Thyroid gland (tissue), 4 donors: ENCODE measurements at regions of chr2 and their contacts with region 1.

Region 1: GRCh38 chr2:173210270-173211196 is 134.9 kb downstream of the MAP3K20 start:
- DNase-seq: peak; percentile 69 to 71
- H3K4me3 ChIP-seq: no peak overlapping the region
- H3K27ac ChIP-seq: peak overlapping the region in 2 of 3 donors; percentile 25 to 29
- H3K4me1 ChIP-seq: peaks cover 19 to 28% of the 10 kb centered on the region in 2 donors
- H3K27me3 ChIP-seq: no peaks in the 10 kb centered on the region
- CTCF ChIP-seq: peak; percentile 55 to 98 (median 90)
- POLR2A ChIP-seq: no peak

Region 2: DNA sequence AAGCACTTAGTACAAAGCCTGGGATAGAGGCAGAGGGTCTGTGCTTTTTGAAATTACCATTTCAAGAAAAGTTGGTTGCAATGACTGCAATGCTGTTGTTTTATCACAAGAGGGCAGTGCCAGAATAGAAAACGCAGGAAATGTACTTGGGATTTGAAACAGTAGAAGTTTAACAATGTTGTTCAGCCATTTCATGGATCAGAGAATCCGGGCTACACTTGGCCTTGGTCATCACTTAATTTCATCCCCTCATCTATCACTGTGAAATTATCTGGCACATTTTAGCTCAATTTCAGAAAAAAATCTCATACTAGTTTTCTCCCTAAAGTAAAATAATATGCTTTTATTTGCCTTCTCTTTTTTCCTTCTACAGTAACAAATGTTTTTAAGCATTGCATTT is 404.0 kb before region 1 on chr2:
- intact Hi-C with region 1: loop called (anchors 5 kb)
- DNase-seq: no peak
- H3K4me3 ChIP-seq: no peak overlapping the region
- H3K27ac ChIP-seq: no peak overlapping the region
- H3K4me1 ChIP-seq: no peaks in the 10 kb centered on the region
- H3K27me3 ChIP-seq: no peaks in the 10 kb centered on the region
- CTCF ChIP-seq: peak; percentile 31 to 89 (median 76)
- POLR2A ChIP-seq: no peak

Region 3: GRCh38 chr2:172985139-172985901 is 225.2 kb before region 1 on chr2:
- intact Hi-C with region 1: no loop called
- DNase-seq: peak; percentile 87 to 88
- H3K4me3 ChIP-seq: no peak overlapping the region
- H3K27ac ChIP-seq: peak overlapping the region; percentile 9 to 36 (median 22)
- H3K4me1 ChIP-seq: peaks cover 4 to 8% of the 10 kb centered on the region in 2 donors
- H3K27me3 ChIP-seq: no peaks in the 10 kb centered on the region
- CTCF ChIP-seq: no peak
- POLR2A ChIP-seq: no peak

Region 4: GRCh38 chr2:173027181-173028128 is 183.1 kb before region 1 on chr2:
- intact Hi-C with region 1: loop called (anchors 5 kb)
- DNase-seq: peak; percentile 88 to 91
- H3K4me3 ChIP-seq: no peak overlapping the region
- H3K27ac ChIP-seq: peak overlapping the region in 2 of 3 donors; percentile 41
- H3K4me1 ChIP-seq: peaks cover 0 to 14% of the 10 kb centered on the region in 2 donors
- H3K27me3 ChIP-seq: no peaks in the 10 kb centered on the region
- CTCF ChIP-seq: peak; percentile 78 to 98 (median 93)
- POLR2A ChIP-seq: no peak

Region 5: GRCh38 chr2:173075781-173076580 is 134.6 kb before region 1 on chr2 and contains the start of gene MAP3K20:
- intact Hi-C with region 1: loop called (anchors 10 kb)
- DNase-seq: peak; percentile 75 to 77
- H3K4me3 ChIP-seq: peak within 1 kb of the TSS; percentile 17 to 57 (median 41)
- H3K27ac ChIP-seq: peak within 1 kb of the TSS; percentile 87 to 96 (median 94)
- H3K4me1 ChIP-seq: peaks cover 6 to 9% of the 10 kb centered on the region in 2 donors
- H3K27me3 ChIP-seq: no peaks in the 10 kb centered on the region
- CTCF ChIP-seq: peak in 3 of 6 experiments; percentile 44 to 62 (median 52)
- POLR2A ChIP-seq: peak; percentile 37 to 76
- total RNA-seq, gene MAP3K20: 24.1 to 34.5 (median 25.6) TPM